Calu3 (cell line): ENCODE measurements at regions of chr6 and their contacts with region 1.

Region 1: DNA sequence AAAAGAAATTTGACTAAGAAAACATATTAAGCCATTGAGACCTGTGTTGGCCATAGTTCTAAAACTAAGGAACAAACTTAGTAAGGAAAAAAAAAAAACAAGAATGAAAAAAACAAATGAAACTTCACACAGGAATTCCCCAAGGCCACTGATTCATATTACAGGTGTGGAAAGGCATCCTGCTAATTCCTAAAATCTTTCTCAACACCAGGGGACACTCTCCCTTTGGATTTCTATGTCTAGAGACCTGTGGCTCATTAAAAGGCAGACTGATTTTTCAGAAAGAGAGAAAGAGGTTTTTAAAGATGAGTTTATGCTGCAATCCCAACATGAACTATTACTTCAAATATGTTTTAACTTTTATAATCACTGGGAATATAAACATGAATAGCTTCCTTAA is at the start of gene OR12D1:
- DNase-seq: peak; percentile 36
- H3K4me3 Mint-ChIP-seq: no peak within 1 kb of the TSS
- H3K27ac Mint-ChIP-seq: no peak within 1 kb of the TSS
- H3K4me1 Mint-ChIP-seq: no peaks in the 10 kb centered on the region
- H3K27me3 Mint-ChIP-seq: no peaks in the 10 kb centered on the region
- CTCF ChIP-seq: peak; percentile 28
- total RNA-seq, gene OR12D1: not detected in 2 replicates

Region 2: DNA sequence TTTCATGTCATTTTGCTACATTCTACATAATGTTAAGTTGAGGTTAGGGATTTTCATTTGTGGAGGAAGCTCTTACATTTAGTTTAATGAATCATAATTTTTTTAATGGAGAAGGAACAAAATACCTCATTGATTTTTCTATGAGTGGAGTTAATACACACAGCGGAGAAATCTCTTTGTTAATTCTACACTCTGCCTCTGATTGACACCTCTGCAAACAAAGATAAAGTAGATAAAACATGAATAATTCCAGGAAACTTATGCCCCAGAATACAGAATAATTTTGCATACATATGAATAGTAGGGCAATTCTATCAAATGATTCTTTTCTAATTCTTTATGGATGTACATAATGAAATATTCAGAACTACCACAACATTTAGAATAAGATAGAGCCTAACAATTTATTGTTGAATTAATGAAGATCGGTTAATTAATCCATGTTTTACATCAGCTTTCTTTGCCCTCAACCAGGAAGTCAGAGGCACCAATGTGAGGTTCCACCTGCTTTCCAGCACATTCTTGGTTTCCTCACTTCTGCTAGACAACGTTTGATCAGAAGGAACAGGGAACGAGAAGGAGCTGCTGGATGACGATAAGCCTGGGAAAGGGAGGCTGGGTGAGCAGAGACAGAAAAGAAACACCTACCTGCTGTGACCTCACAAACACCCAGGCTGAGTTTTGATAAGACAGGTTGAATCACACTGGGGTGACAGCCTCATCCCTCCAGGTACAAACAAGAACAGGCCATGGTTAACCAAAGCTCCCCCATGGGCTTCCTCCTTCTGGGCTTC is 46.6 kb after region 1 on chr6:
- CTCF ChIA-PET with region 1: no interaction called
- intact Hi-C with region 1: loop called (anchors 1 kb)
- DNase-seq: peak; percentile 16
- H3K4me3 Mint-ChIP-seq: no peak overlapping the region
- H3K27ac Mint-ChIP-seq: peak overlapping the region; percentile 31
- H3K4me1 Mint-ChIP-seq: peaks cover 18% of the 10 kb centered on the region
- H3K27me3 Mint-ChIP-seq: no peaks in the 10 kb centered on the region
- CTCF ChIP-seq: no peak

Region 3: DNA sequence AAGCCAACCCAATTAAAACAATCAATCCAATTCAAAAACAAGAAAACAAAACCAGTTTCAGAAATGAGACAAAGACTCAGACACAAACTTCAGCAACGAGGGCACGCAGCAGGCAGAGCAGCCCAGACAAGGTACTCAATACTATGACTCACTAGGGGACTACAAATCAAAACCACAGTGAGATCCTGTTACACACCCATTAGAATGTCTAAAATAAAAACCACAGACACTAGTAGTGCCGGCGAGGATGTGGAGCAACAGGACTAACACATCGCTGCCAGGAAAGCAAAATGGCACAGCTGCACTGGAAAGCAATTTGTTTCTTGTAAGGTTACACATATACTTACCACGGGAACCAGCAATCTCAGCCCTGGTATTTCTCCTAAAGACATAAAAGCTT is 101.5 kb after region 1 on chr6:
- CTCF ChIA-PET with region 1: no interaction called
- intact Hi-C with region 1: loop called (anchors 10 kb)
- DNase-seq: peak; percentile 65
- H3K4me3 Mint-ChIP-seq: no peak overlapping the region
- H3K27ac Mint-ChIP-seq: peak overlapping the region; percentile 51
- H3K4me1 Mint-ChIP-seq: peaks cover 17% of the 10 kb centered on the region
- H3K27me3 Mint-ChIP-seq: no peaks in the 10 kb centered on the region
- CTCF ChIP-seq: no peak

Region 4: GRCh38 chr6:29537714-29538403 is 123.3 kb after region 1 on chr6:
- CTCF ChIA-PET with region 1: no interaction called
- intact Hi-C with region 1: no loop called
- DNase-seq: no peak
- H3K4me3 Mint-ChIP-seq: no peak overlapping the region
- H3K27ac Mint-ChIP-seq: no peak overlapping the region
- H3K4me1 Mint-ChIP-seq: no peaks in the 10 kb centered on the region
- H3K27me3 Mint-ChIP-seq: no peaks in the 10 kb centered on the region
- CTCF ChIP-seq: no peak

Region 5: DNA sequence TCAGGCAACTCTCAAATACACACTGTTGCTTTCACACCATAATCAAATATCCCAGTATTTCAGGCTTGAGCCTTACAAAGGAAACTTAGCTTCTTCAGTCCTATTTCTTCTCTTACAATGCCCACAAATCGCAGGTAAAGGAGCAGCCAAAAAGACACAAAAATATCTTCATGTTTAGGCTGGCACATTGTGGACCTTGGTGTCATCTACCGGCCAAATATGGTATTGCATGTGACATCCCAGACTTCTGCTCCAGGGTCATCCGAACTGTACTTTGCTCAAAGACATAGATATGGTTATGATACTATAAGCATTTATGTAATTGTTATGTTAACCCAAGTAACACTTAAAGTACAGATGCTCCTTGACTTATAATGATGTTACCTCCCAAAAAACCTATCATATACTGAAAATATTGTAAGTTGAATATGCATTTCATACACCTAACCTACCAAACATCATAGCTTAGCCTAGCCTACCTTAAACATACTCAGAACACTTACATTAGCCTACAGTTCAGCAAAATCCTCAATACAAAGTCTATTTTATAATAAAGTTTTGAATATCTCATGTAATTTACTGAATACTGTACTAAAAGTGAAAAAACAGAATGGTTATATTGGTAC is 174.9 kb after region 1 on chr6:
- CTCF ChIA-PET with region 1: interaction called, 3 read pairs
- intact Hi-C with region 1: loop called (anchors 1 kb)
- DNase-seq: peak; percentile 73
- H3K4me3 Mint-ChIP-seq: no peak overlapping the region
- H3K27ac Mint-ChIP-seq: no peak overlapping the region
- H3K4me1 Mint-ChIP-seq: peaks cover 28% of the 10 kb centered on the region
- H3K27me3 Mint-ChIP-seq: no peaks in the 10 kb centered on the region
- CTCF ChIP-seq: peak; percentile 96